CD4-positive, alpha-beta T cell (primary cell): ENCODE measurements at regions of chr7 and their contacts with region 1.

Region 1: DNA sequence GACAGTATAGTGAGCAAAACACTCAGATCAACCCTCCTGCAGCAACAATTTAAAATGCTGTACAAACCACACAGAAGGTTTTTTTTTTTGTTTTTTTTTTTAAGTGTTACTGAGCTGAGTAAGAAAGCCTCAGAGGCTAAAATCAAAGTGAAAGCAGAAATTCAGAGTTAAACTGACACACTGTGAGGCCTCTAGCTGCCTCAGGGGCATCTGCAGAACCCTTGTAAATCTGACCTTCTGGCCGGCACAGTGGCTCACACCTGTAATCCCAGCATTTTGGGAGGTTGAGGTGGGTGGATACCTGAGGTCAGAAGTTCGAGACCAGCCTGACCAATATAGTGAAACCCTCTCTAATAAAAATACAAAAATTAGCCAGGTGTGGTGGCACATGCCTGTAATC is 7.4 kb upstream of the GNA12 start:
- DNase-seq: peak in 1 of 14 experiments; percentile 22
- ATAC-seq: peak; percentile 67
- H3K4me3 ChIP-seq: no peak overlapping the region
- H3K4me3 Mint-ChIP-seq: no peak overlapping the region
- H3K27ac ChIP-seq: no peak overlapping the region
- H3K27ac Mint-ChIP-seq: peak overlapping the region; percentile 41
- H3K4me1 ChIP-seq: peaks cover 4% of the 10 kb centered on the region
- H3K4me1 Mint-ChIP-seq: peaks cover 11% of the 10 kb centered on the region
- H3K27me3 ChIP-seq: no peaks in the 10 kb centered on the region
- H3K27me3 Mint-ChIP-seq: no peaks in the 10 kb centered on the region
- CTCF ChIP-seq: no peak

Region 2: GRCh38 chr7:2838873-2839578 is 12.5 kb before region 1 on chr7:
- CTCF ChIA-PET with region 1: no interaction called
- POLR2A ChIA-PET with region 1: no interaction called
- intact Hi-C with region 1: no loop called
- DNase-seq: no peak
- ATAC-seq: no peak
- H3K4me3 ChIP-seq: no peak overlapping the region
- H3K4me3 Mint-ChIP-seq: peak overlapping the region; percentile 31
- H3K27ac ChIP-seq: no peak overlapping the region
- H3K27ac Mint-ChIP-seq: no peak overlapping the region
- H3K4me1 ChIP-seq: peaks cover 12% of the 10 kb centered on the region
- H3K4me1 Mint-ChIP-seq: peaks cover 64% of the 10 kb centered on the region
- H3K27me3 ChIP-seq: no peaks in the 10 kb centered on the region
- H3K27me3 Mint-ChIP-seq: no peaks in the 10 kb centered on the region
- CTCF ChIP-seq: no peak

Region 3: GRCh38 chr7:2896131-2896530 is 44.6 kb after region 1 on chr7:
- CTCF ChIA-PET with region 1: no interaction called
- POLR2A ChIA-PET with region 1: no interaction called
- intact Hi-C with region 1: loop called in 1 of 2 experiments (anchors 1 kb)
- DNase-seq: no peak
- ATAC-seq: no peak
- H3K4me3 ChIP-seq: no peak overlapping the region
- H3K4me3 Mint-ChIP-seq: no peak overlapping the region
- H3K27ac ChIP-seq: no peak overlapping the region
- H3K27ac Mint-ChIP-seq: no peak overlapping the region
- H3K4me1 ChIP-seq: peaks cover 22% of the 10 kb centered on the region
- H3K4me1 Mint-ChIP-seq: peaks cover 20% of the 10 kb centered on the region
- H3K27me3 ChIP-seq: no peaks in the 10 kb centered on the region
- H3K27me3 Mint-ChIP-seq: no peaks in the 10 kb centered on the region
- CTCF ChIP-seq: no peak